ENCODE measurements at regions of chr9 and their contacts with region 1.

Region 1: DNA sequence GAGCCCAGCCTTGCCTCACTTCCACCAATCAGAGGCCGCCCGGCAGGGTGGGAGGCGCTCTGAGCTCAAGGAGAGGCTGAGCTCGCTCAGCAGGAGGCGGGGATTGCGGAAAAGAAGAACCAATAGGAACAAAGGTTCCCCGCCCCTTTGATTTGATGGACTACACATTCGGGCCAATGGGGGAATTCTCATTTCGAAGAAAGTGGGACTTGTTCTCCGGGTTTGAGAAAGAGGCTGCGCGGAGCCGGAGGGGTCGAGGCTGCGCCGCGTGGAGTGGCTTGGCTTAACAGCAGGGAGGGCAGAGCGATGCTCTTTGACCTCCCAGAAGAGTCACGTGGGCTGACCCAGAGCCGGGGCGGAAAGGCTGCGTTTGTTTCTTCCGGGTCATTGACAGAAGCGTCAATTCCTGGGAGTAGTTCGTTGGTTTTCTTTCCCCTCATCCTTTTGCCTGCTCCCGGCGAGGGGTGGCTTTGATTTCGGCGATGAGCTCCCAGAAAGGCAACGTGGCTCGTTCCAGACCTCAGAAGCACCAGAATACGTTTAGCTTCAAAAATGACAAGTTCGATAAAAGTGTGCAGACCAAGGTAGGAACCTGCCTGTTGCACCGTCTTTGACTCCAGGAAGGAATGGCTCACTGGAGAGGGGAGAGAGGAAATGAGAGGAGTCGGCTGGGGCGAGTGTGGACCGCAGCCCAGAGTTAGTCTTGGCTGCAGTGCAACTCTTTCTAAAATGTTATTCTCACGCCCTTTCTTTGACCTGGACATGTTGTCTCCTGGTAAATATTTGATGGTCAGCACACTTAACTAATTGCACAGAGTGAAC is at the start of gene C9orf85:
- DNase-seq: peak; percentile 97
- H3K4me3 Mint-ChIP-seq: peak within 1 kb of the TSS; percentile 100
- H3K27ac Mint-ChIP-seq: peak within 1 kb of the TSS; percentile 99
- H3K4me1 Mint-ChIP-seq: peaks cover 43% of the 10 kb centered on the region
- H3K27me3 Mint-ChIP-seq: no peaks in the 10 kb centered on the region
- total RNA-seq, gene C9orf85: 8.3 and 9.8 TPM in 2 replicates

Region 2: DNA sequence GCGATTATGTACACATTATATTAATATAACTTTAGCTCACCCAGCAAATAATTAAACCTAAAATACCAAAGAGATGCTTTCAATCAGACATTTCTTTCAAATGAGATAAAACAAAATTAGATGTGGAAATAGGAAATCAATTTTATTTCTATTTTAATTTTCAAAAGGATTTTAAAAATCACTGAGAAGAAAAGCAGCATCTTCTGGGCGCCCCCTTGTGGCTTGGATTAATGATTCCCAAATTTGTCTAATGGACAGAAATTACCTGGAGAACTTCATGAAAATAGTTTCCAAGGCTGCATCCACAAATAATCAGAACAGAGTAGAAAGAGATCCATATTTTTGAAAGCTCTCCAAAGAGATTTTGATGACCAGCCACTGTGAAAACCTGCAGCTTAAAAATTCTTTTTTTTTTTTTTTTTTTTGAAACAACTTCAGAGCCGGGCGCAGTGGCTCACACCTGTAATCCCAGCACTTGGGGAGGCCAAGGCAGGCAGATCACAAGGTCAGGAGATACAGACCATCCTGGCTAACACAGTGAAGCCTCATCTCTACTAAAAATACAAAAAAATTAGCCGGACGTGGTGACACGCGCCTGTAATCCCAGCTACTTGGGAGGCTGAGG is 92.2 kb before region 1 on chr9:
- intact Hi-C with region 1: loop called (anchors 1 kb)
- DNase-seq: no peak
- H3K4me3 Mint-ChIP-seq: no peak overlapping the region
- H3K27ac Mint-ChIP-seq: no peak overlapping the region
- H3K4me1 Mint-ChIP-seq: peaks cover 29% of the 10 kb centered on the region
- H3K27me3 Mint-ChIP-seq: peaks cover 7% of the 10 kb centered on the region

Region 3: DNA sequence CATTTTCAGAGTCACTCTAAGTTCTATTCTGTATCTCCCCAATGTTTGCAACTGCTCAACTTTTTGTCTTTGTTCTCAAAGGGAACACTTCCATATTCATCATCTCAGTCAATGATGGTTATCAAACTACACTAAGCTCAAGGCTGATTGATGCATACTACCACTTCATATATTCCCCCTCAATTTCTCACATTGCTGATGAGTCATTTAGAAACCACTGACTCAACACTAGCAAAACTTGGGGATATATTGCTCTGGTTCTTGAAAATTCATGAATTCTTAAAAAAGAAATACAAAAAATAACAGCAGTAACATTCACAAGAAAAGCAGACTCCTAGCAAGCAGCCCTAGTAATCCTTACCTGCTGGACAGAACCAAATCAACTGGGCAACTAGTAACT is 52.7 kb before region 1 on chr9:
- intact Hi-C with region 1: loop called (anchors 1 kb)
- DNase-seq: no peak
- H3K4me3 Mint-ChIP-seq: no peak overlapping the region
- H3K27ac Mint-ChIP-seq: peak overlapping the region; percentile 44
- H3K4me1 Mint-ChIP-seq: peaks cover 29% of the 10 kb centered on the region
- H3K27me3 Mint-ChIP-seq: no peaks in the 10 kb centered on the region

Region 4: DNA sequence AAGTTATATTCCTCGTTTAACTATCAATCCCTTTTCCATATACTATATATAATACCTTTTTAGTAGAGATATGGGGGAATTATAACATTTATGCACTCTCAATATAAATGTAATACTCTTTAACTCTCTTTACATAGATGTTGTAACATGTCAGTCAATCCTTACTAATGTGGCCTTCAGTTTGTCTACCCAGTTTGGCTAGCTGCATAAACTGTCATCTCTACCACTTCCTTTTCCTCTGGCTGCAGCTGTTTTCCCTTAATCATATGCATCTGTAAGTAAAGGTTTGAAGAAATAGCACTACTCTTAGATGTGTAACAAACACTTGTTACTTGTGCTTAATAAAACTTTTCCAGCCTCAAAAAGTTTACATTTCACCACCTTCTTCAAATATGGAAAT is 13.9 kb before region 1 on chr9:
- intact Hi-C with region 1: loop called (anchors 1 kb)
- DNase-seq: no peak
- H3K4me3 Mint-ChIP-seq: peak overlapping the region; percentile 2
- H3K27ac Mint-ChIP-seq: peak overlapping the region; percentile 38
- H3K4me1 Mint-ChIP-seq: peaks cover 76% of the 10 kb centered on the region
- H3K27me3 Mint-ChIP-seq: no peaks in the 10 kb centered on the region

Region 5: GRCh38 chr9:71966601-71967000 is 55.1 kb after region 1 on chr9:
- intact Hi-C with region 1: loop called (anchors 5 kb)
- DNase-seq: no peak
- H3K4me3 Mint-ChIP-seq: no peak overlapping the region
- H3K27ac Mint-ChIP-seq: no peak overlapping the region
- H3K4me1 Mint-ChIP-seq: peaks cover 4% of the 10 kb centered on the region
- H3K27me3 Mint-ChIP-seq: no peaks in the 10 kb centered on the region

Region 6: DNA sequence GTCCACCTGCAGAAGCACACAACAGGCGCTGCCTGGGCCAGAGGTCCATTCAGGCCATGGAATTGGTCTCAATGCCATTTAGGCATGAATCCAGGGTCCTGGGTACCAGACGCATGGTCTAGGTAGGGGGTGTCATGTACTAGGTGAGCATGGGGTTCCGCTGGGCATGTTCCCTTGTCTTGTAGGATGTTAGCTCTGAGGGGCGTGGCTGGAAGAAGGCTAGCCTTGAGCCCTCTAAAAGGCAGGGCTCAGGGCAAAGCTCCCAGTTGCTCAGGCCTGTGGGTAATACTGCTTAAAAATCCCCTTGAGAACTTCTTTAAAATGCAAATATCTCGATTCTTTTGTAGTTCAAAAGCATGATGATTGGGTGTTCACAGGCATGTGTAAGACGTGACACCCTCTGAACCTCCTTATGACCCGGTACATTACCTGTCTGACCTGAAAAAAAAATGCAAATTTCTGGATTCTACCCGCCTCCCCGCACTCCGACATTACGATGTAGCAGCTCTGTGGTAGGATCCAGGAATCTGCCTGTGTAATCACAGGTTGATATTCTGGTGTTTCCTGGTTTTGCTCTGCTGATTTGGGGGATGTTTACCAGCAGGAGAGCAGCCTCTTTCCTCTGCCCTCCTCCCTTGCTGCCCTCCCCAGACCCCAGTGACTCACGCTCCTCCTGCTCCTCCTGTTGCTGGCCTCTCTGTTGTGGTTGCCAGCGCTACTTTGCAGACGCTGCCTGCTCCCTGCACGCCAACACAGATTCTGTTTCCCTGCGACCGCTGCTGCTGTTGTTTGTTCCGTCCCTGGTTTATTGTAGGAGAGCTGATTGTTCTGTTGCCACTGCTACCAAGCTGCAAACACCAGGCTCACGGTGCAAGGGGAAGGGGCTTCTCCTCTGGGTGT is 615.7 kb after region 1 on chr9:
- intact Hi-C with region 1: loop called (anchors 5 kb)
- DNase-seq: peak; percentile 61
- H3K4me3 Mint-ChIP-seq: peak overlapping the region; percentile 72
- H3K27ac Mint-ChIP-seq: peak overlapping the region; percentile 94
- H3K4me1 Mint-ChIP-seq: peaks cover 43% of the 10 kb centered on the region
- H3K27me3 Mint-ChIP-seq: no peaks in the 10 kb centered on the region